Activated T-helper 1 cell treated with anti-CD3 and anti-CD28 coated beads, Interleukin-12 subunit alpha, Interleukin-12 subunit beta, Interleukin-2, Interleukin-4 antibody, amounts not matched to agents 30 ng/mL and 10 ng/mL and 1 ng/mL, durations not matched to agents 14 hours and 24 hours and 36 hours (primary cell): ENCODE measurements at regions of chr7 and their contacts with region 1.

Region 1: DNA sequence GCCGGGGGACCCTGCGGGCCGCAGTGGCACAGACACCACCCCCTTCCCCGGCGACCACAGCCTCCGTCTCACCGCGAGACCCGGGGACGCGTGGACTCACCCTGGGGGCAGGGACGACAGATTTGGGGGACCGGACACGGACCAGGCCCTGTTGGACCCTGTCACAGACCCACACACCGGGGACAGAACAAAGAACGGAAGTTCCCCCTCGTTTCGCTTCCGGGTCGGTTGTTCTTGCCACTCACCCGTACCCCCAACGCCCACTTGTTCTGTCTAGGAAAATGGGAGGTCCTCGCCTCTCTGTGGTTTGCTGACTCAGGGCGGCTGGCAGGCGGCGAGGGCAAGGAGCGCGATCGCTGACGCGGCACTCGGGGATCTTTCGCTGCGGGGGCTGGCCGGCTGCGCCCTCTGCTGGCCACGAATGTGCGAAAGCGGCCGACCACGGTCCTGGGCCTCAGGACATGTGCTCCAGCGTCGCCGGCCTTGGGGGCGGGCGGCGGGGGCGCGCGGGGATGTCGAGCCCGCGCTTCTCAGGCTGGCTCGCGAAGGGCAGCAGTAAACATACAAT is at the start of gene ZNF3:
- DNase-seq: peak; percentile 98
- H3K4me3 Mint-ChIP-seq: peak within 1 kb of the TSS; percentile 89
- H3K27ac Mint-ChIP-seq: peak within 1 kb of the TSS; percentile 92
- H3K4me1 Mint-ChIP-seq: peaks cover 31% of the 10 kb centered on the region
- H3K27me3 Mint-ChIP-seq: peaks cover 4% of the 10 kb centered on the region
- total RNA-seq, gene ZNF3: 24.6 and 26.1 TPM in 2 replicates

Region 2: DNA sequence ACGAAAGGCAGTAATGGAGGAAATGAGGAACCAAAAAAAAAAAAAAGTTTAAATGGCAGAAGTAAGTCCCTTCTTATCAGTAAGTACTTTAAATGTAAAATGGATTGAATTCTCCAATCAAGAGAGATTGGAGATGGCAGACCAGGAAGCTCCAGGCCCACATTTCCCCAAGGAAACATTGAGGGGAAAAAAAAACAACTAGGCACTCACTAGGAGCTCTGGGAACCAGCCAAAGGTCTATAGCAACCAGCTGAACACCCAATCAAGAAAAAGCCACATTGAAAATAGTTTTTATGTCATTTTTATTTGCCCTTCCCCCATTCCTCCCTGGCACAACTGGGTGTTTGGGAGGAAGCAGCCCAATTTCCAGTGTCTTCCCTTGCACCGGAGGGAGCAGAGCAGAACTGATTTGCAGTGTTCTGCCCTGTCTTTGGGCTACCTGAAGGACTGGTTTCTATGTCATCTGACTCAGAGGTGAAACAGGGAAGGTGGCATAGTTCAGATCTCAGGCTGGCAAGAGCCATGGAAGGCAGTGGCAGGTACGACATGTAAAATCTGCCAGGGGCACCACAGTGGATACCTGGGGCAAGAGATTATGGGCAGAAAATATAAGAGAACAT is 1059.6 kb before region 1 on chr7:
- intact Hi-C with region 1: no loop called
- DNase-seq: no peak
- H3K4me3 Mint-ChIP-seq: no peak overlapping the region
- H3K27ac Mint-ChIP-seq: no peak overlapping the region
- H3K4me1 Mint-ChIP-seq: peaks cover under 1% of the 10 kb centered on the region
- H3K27me3 Mint-ChIP-seq: no peaks in the 10 kb centered on the region

Region 3: DNA sequence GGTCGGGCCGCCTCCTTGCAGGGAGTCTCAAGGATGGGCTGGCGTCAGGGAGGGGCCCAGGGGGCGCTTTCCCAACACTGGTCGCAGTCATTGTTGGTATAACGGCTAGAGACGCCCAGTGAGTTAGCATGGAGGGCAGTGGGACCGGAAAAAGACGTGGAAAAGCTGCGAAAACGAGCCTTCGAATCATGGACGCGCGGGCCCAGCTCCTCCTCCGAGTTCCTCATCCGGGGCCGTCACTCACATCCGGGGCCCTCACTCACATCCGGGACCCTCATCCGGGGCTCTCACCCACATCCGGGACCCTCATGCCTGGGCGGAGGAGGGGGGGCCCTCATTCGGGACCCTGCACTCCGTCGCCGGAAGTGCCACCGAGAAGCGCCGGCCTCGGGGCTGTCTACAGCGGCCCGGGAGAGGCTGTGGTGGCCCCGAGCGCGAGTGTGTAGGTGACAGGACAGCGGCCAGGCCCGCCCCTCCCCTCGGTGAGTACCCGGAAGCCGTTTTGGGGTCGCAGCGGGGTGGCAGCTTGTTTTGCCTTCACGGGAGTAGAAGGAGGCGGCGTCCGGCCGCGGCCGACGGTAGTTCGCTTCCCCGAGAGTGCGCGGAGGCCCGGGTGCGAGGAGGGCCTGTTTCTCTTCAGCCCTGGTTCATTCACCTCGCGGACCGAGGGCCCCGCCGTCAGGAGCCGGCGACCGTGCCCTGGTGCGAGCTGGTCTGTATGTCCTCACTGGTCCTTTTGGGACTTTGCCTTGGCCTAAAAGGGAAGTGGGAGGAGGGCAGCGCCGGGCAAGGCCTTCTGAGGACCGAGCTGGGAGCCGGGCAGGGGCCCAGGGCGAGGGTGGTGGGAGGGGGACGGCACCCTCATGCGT is 523.1 kb before region 1 on chr7 and contains the start of gene ZNF655:
- intact Hi-C with region 1: loop called (anchors 2 kb)
- DNase-seq: peak; percentile 89
- H3K4me3 Mint-ChIP-seq: peak within 1 kb of the TSS; percentile 100
- H3K27ac Mint-ChIP-seq: peak within 1 kb of the TSS; percentile 98
- H3K4me1 Mint-ChIP-seq: peaks cover 48% of the 10 kb centered on the region
- H3K27me3 Mint-ChIP-seq: no peaks in the 10 kb centered on the region
- total RNA-seq, gene ZNF655: 77.9 and 79.9 TPM in 2 replicates

Region 4: DNA sequence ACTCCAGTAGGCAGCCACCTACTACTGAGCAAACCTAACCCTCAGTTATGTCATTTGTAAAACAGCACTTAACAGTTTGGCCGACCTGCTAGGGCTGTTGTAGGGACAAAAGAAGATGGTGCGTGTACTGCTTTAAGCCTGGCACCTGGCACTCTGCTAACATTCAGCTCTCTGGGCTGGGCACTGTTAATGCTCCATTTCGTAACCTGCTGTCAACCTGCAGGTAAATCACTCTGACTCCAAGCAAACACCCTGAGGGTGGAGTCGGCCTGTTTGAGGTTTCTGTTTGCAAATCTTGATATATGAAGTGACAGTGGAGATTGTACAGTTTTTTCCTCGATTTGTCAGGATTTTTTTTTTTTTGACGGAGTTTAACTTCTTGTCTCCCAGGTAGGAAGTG is 59.0 kb before region 1 on chr7:
- intact Hi-C with region 1: loop called (anchors 2 kb)
- DNase-seq: no peak
- H3K4me3 Mint-ChIP-seq: no peak overlapping the region
- H3K27ac Mint-ChIP-seq: no peak overlapping the region
- H3K4me1 Mint-ChIP-seq: peaks cover 59% of the 10 kb centered on the region
- H3K27me3 Mint-ChIP-seq: no peaks in the 10 kb centered on the region

Region 5: DNA sequence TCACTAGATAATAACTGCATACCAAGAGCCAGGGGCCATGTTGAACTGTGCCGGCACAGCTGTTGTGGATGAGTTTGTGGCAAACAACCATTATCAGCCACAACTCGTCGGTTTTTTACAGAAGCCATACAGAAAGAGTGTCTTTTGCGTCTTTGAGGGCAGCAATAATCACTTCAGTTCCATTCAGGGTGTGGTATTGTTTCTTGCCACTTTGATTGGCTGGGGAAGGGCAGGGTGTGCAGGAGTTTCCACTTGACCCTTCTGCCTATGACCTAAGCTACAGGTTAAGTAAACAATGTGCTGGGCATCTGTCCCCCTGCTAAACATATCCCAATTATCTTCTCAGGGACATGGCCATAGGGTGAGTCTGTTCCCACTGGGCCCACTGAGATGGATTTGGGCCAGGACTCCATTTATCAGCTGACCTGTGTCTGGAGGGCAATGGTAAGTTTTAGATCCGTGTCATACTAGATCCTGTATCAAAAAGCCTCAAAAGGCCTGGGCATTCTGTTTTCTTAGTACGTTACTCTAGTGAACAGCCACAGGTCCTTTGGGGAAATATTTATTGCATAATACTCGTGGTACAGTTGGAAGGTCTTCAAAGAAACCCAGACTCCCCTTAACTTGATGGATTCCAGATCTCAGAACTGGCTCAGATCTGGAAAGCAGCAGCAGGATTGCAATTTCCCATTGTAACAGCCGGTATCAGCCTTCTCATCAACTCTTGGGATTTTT is 16.0 kb before region 1 on chr7:
- intact Hi-C with region 1: no loop called
- DNase-seq: no peak
- H3K4me3 Mint-ChIP-seq: no peak overlapping the region
- H3K27ac Mint-ChIP-seq: no peak overlapping the region
- H3K4me1 Mint-ChIP-seq: no peaks in the 10 kb centered on the region
- H3K27me3 Mint-ChIP-seq: no peaks in the 10 kb centered on the region

Region 6: DNA sequence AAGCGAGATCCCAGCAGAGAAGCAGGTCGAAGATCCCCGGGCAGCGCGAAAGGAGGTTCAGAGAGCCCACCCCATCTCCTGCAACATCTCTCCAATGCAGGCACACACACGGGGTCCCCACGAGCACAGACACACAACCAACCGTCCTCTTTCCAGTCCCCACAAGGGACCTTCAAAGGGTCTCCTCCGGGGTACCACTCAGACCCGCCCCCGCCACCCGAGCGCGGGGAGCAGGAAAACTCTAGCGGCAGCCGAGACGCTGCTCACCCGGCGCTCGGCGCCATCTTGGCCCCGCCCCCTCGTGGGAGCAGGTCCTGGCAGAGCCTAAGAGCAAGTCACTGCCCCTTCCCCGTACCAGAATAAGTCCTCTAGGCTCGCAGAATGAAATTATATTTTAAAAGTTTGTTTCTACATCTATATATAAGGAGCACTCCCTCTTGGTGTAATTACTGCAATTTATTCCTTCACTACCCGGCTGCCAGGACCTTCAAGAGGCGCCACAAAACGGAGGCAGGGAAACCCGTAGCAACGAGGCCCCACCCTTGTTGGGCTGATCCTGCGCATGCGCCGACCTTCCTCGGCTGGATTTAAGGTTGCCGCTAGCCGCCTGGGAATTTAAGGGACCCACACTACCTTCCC is 37.6 kb after region 1 on chr7 and contains the starts of genes CNPY4 and TAF6:
- intact Hi-C with region 1: loop called (anchors 1 kb)
- DNase-seq: peak; percentile 90
- H3K4me3 Mint-ChIP-seq: peak within 1 kb of the TSS; percentile 98
- H3K27ac Mint-ChIP-seq: peak within 1 kb of the TSS; percentile 97
- H3K4me1 Mint-ChIP-seq: peaks cover 16% of the 10 kb centered on the region
- H3K27me3 Mint-ChIP-seq: no peaks in the 10 kb centered on the region
- total RNA-seq, gene CNPY4: 19.6 and 21.7 TPM in 2 replicates
- total RNA-seq, gene TAF6: 72.9 and 79.2 TPM in 2 replicates